ENCODE measurements at regions of chrX and their contacts with region 1.

Region 1: GRCh38 chrX:115616943-115617563 is 56.1 kb downstream of the PLS3 start:
- DNase-seq: peak; percentile 49
- H3K4me3 ChIP-seq: no peak overlapping the region
- H3K27ac ChIP-seq: no peak overlapping the region
- H3K4me1 ChIP-seq: peaks cover 33% of the 10 kb centered on the region
- H3K27me3 ChIP-seq: no peaks in the 10 kb centered on the region
- CTCF ChIP-seq: no peak
- POLR2A ChIP-seq: no peak

Region 2: DNA sequence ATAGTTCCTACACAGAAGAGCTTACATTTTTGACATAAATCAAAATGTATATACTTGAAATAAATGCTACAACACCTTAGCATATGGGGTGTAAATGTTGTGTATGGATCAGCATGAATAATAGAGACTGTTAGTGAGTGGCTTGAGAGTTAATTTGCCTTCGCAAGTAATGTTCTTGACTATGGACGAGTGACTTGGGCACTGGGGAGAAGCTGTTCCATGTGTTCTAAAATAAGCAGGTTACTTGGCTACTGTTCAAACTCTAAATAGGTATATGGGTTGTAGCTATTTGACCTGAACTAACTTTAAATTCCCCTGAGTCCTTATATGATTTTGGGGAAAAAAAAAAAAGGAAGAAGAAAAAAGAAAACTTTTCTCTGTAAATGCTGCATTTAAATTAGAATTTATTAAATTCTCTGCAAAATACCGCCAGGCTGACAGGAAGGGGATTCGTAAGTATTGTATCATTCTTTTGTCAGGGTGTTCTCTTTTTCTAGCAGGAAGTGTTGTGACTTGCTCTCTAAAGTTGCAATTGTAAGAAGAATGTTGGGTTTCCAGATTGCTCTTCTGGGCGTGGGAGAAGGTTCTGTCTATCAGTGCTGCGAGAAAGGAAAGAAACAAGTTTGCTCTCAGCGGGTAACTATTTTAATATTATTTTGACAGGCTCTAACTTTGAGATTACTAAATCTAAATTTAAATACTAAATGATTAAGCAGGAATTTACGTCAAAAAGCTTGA is 23.9 kb before region 1 on chrX:
- CTCF ChIA-PET with region 1: no interaction called
- POLR2A ChIA-PET with region 1: interaction called, 3 read pairs
- dilution Hi-C with region 1: no loop called
- intact Hi-C with region 1: loop called (anchors 1 kb)
- DNase-seq: peak; percentile 71
- H3K4me3 ChIP-seq: peak overlapping the region; percentile 7 to 99 (median 84)
- H3K27ac ChIP-seq: peak overlapping the region; percentile 93
- H3K4me1 ChIP-seq: peaks cover 30% of the 10 kb centered on the region
- H3K27me3 ChIP-seq: no peaks in the 10 kb centered on the region
- CTCF ChIP-seq: no peak
- POLR2A ChIP-seq: peak; percentile 75

Region 3: DNA sequence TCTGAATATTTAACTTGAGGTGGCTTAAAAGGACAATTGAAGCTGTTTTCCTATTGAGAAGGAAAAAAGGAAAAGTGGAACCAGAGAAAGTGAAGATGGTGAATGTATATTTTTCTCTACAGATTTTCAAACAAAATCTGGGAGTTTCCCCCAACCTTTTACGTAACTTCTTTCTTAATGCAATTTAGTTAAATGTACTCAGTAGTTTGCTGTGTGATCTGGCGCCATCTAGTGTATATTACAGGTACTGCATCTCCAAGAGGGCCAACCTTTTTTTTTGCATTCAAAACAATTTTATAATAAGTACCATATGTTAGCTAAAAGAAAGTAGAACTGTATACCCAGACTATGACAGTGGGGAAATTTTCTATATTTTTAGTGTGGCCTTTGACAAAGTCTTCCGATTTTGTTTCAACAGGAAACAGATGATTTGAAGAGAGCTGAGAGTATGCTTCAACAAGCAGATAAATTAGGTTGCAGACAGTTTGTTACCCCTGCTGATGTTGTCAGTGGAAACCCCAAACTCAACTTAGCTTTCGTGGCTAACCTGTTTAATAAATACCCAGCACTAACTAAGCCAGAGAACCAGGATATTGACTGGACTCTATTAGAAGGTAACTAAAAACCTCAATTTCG is 26.0 kb after region 1 on chrX:
- CTCF ChIA-PET with region 1: interaction called, 4 read pairs
- POLR2A ChIA-PET with region 1: interaction called, 5 read pairs
- dilution Hi-C with region 1: no loop called
- intact Hi-C with region 1: loop called (anchors 2 kb)
- DNase-seq: peak; percentile 69
- H3K4me3 ChIP-seq: no peak overlapping the region
- H3K27ac ChIP-seq: no peak overlapping the region
- H3K4me1 ChIP-seq: peaks cover 10% of the 10 kb centered on the region
- H3K27me3 ChIP-seq: no peaks in the 10 kb centered on the region
- CTCF ChIP-seq: peak; percentile 46 to 48
- POLR2A ChIP-seq: no peak

Measured in endothelial cell of umbilical vein (primary cell).